Right ventricle myocardium inferior (tissue), 1 donor: ENCODE measurements at regions of chr7 and their contacts with region 1.

Region 1: DNA sequence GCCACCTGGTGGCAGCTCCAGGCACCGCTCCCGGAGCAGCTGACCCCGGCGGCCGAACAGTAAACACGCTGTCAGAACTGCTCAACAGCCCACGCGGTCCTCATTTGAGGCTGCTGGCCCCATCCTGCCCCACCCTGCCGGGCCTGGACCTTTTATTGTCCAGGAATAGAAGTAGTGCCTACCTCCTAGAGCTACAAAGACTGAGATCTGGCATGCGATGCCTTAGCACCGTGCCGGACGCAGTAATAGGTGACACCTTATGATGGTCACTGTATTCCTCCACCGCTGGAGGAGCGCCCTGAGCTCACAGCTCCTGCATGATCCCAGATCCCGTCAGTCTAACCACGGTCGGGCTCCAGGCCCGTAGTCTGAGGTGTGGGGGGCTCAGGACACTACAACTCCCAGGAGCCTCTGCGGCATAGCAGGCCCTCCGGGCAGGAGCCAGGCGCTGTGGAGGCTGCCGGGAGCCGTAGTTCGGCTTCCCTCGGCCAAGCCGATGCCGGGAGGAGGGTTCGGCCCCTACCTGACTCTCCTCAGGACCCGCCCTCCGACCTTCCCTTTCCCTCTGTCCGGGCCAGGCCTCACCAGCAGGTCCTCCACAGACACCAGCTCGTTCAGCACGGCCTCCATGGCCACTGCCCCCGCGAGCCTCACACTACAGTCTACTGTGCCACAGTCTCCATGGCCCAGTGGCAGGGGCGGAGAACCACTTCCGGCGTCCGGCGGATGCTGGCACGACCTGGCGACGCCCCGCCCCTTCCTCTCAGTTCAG is at the start of gene FIS1:
- DNase-seq: peak; percentile 97
- ATAC-seq: peak; percentile 98
- total RNA-seq, gene FIS1: 331 TPM

Region 2: GRCh38 chr7:101217388-101218235 is 26.9 kb before region 1 on chr7 and contains the starts of genes PLOD3 and ZNHIT1:
- intact Hi-C with region 1: loop called (anchors 1 kb)
- DNase-seq: peak; percentile 97
- ATAC-seq: peak; percentile 95
- total RNA-seq, gene PLOD3: 41.7 TPM
- total RNA-seq, gene ZNHIT1: 57.5 TPM

Region 3: DNA sequence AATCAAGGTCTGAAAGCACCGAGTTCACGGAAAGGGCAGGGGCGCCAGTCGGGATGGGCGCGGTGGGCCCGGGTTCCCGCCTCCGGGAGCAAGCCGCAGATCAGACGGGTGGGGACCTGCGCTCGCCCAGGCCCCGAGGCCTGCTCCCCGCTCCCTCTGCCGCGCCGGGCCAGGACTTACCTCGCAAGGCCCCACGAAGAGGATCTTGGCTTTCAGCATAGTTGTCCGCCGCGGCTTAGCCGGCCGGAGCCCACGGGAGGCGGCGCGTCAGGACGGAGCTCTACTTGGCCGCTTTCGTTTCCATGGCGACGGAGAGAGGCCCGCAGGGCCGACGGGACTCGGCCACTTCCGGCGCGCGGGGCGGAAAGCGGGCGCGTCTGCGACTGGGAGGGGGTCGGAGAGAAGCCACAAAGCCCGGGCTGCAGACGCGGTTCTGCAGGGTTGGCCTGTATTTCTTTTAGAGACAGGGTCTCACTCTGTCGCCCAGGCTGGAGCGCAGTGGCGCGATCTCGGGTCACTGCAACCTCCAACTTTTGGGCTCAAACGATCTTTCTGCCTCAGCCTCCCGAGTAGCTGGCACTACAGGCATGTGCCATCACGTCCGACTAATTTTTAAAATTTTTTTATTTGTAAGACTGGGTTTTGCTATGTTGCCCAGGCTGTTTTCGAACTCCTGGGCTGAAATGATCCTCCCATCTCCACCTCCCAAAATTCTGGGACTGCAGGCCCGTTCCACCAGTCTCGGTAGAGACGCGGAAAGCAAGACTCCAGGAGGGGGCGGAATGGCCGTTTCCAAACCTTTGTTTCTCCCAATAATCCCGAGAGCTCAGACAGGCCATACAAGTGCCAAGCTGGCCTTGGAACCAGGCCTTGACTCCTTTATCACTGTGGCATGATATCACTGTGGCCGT is 77.2 kb after region 1 on chr7 and contains the start of gene IFT22:
- intact Hi-C with region 1: no loop called
- DNase-seq: peak; percentile 95
- ATAC-seq: peak; percentile 99
- total RNA-seq, gene IFT22: 26.5 TPM

Region 4: GRCh38 chr7:101386558-101387231 is 142.1 kb after region 1 on chr7:
- intact Hi-C with region 1: no loop called
- DNase-seq: no peak
- ATAC-seq: no peak